ENCODE measurements at regions of chr5 and their contacts with region 1.

Region 1: DNA sequence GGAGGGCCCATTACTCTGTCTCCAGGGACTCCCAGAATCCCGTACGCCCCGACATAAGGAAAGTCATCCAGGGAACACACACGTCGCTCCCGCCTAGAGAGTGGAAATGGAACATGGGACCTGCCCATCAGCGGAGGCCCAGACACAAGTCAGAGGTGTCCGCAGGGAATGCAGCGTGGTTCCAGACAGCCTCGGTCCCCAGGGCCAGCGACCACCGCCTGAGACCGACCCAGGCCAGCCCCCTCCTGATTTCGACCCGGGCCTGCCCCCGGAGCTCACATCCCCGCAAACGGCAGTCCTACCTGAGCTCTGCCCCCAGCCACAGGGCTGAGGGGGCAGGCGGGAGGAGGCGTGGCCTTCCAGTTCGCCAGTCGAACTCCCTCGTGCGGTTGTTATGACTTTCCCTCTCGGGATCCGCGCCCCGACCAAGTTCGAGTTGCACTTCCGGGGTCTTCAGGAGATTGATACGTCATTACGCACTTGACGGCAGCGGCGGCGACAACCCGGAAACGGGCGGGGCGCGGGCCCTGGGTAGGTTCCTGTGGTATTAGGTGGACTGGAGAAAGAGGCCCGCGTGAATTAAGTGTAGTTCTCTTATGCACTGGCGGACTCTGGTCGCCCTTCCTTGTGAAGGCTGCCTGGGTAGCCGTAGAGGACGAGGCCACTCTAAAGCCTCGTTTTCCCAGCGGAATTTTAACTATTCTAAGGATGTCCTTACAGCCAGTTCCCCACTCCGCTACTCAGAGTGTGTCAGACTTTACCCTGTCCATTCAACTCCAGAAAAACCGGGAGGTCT is 370.0 kb upstream of the POU5F2 start:
- DNase-seq: peak; percentile 92 to 95
- H3K4me3 ChIP-seq: peak overlapping the region; percentile 82
- H3K27ac ChIP-seq: peak overlapping the region; percentile 64
- H3K4me1 ChIP-seq: peaks cover 11% of the 10 kb centered on the region
- H3K27me3 ChIP-seq: no peaks in the 10 kb centered on the region
- CTCF ChIP-seq: no peak; the same call in 1 of the 2 replicates

Region 2: DNA sequence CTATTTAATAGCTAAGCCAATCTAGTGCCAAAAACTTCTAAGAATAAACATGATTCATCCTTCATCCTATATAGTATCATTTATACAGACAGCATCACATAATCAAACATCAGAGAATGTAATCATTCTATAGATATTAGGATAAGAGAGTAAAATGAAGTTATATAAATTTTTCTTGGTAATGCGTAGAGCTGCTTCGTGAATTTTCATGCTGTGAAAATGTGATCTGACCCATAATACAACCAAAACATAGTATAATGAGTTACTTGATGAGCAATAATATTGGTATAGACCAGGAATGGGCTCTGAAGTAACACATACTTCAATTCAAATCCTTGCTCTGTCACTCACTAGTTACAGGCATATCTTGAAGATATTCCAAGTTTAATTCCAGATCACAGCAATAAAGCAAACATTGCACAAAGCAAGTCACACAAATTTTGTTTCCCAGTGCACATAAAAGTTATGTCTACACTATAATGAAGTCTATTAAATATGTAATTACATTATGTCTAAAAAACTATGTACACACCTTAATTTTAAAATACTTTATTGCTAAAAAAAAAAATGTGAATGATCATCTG is 554.3 kb before region 1 on chr5:
- CTCF ChIA-PET with region 1: no interaction called
- POLR2A ChIA-PET with region 1: no interaction called
- intact Hi-C with region 1: no loop called
- DNase-seq: no peak
- H3K4me3 ChIP-seq: no peak overlapping the region
- H3K27ac ChIP-seq: no peak overlapping the region
- H3K4me1 ChIP-seq: no peaks in the 10 kb centered on the region
- H3K27me3 ChIP-seq: no peaks in the 10 kb centered on the region
- CTCF ChIP-seq: no peak

Region 3: DNA sequence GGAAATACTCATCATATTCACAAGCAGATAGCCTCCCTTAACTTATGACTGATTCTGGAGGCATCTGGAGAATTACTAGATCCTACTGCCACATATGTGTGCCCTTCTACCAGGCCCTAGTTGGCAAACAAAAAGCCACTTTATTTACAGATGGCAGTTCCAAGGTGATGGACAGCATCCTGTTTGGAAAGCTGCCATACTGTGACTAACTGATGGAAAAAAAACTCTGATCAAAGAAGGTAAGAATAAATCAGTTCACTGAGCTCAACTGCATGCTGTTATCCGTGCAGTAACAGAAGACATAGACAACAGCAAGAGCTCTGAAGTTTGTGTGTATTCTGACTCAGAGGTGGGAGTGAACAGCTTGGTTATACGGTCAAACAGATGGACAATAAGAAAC is 90.2 kb before region 1 on chr5:
- CTCF ChIA-PET with region 1: no interaction called
- POLR2A ChIA-PET with region 1: no interaction called
- intact Hi-C with region 1: loop called (anchors 1 kb)
- DNase-seq: peak; percentile 39 to 91
- H3K4me3 ChIP-seq: no peak overlapping the region
- H3K27ac ChIP-seq: peak overlapping the region; percentile 41; the same call in 1 of the 2 replicates
- H3K4me1 ChIP-seq: peaks cover 17% of the 10 kb centered on the region
- H3K27me3 ChIP-seq: no peaks in the 10 kb centered on the region
- CTCF ChIP-seq: no peak

Region 4: GRCh38 chr5:94618493-94619328 is 507.3 kb after region 1 on chr5 and contains the starts of genes KIAA0825 and SLF1:
- CTCF ChIA-PET with region 1: no interaction called
- POLR2A ChIA-PET with region 1: no interaction called
- intact Hi-C with region 1: loop called (anchors 2 kb)
- DNase-seq: peak; percentile 80 to 82
- H3K4me3 ChIP-seq: peak within 1 kb of the TSS; percentile 70
- H3K27ac ChIP-seq: peak within 1 kb of the TSS; percentile 56
- H3K4me1 ChIP-seq: peaks cover 26% of the 10 kb centered on the region
- H3K27me3 ChIP-seq: no peaks in the 10 kb centered on the region
- CTCF ChIP-seq: no peak
- total RNA-seq, gene KIAA0825: 0.93 and 1.9 TPM in 2 replicates
- total RNA-seq, gene SLF1: 8.8 and 10.2 TPM in 2 replicates